ENCODE measurements at regions of chr5 and their contacts with region 1.

Region 1: GRCh38 chr5:142713121-142713706 is 27.3 kb upstream of the FGF1 start:
- DNase-seq: peak; percentile 93
- ATAC-seq: peak; percentile 98
- H3K4me3 ChIP-seq: peak overlapping the region; percentile 28 to 68 (median 57)
- H3K4me3 Mint-ChIP-seq: peak overlapping the region; percentile 80
- H3K27ac ChIP-seq: no peak overlapping the region
- H3K27ac Mint-ChIP-seq: no peak overlapping the region
- H3K4me1 ChIP-seq: peaks cover 3 to 9% of the 10 kb centered on the region in 2 donors
- H3K4me1 Mint-ChIP-seq: peaks cover 5% of the 10 kb centered on the region
- H3K27me3 ChIP-seq: peaks cover 0 to 15% (median 4%) of the 10 kb centered on the region in 4 experiments
- H3K27me3 Mint-ChIP-seq: peaks cover 18% of the 10 kb centered on the region
- CTCF ChIP-seq: peak; percentile 99

Region 2: GRCh38 chr5:142151436-142152383 is 561.5 kb before region 1 on chr5:
- CTCF ChIA-PET with region 1: interaction called, 8 read pairs
- POLR2A ChIA-PET with region 1: no interaction called
- intact Hi-C with region 1: loop called (anchors 5 kb)
- DNase-seq: peak; percentile 67
- ATAC-seq: no peak
- H3K4me3 ChIP-seq: no peak overlapping the region
- H3K4me3 Mint-ChIP-seq: no peak overlapping the region
- H3K27ac ChIP-seq: no peak overlapping the region
- H3K27ac Mint-ChIP-seq: no peak overlapping the region
- H3K4me1 ChIP-seq: no peaks in the 10 kb centered on the region
- H3K4me1 Mint-ChIP-seq: no peaks in the 10 kb centered on the region
- H3K27me3 ChIP-seq: no peaks in the 10 kb centered on the region
- H3K27me3 Mint-ChIP-seq: no peaks in the 10 kb centered on the region
- CTCF ChIP-seq: peak; percentile 90

Region 3: GRCh38 chr5:142701673-142702311 is 11.4 kb before region 1 on chr5:
- CTCF ChIA-PET with region 1: interaction called, 16 read pairs
- POLR2A ChIA-PET with region 1: no interaction called
- intact Hi-C with region 1: no loop called
- DNase-seq: no peak
- ATAC-seq: no peak
- H3K4me3 ChIP-seq: no peak overlapping the region
- H3K4me3 Mint-ChIP-seq: no peak overlapping the region
- H3K27ac ChIP-seq: no peak overlapping the region
- H3K27ac Mint-ChIP-seq: no peak overlapping the region
- H3K4me1 ChIP-seq: no peaks in the 10 kb centered on the region
- H3K4me1 Mint-ChIP-seq: no peaks in the 10 kb centered on the region
- H3K27me3 ChIP-seq: peaks cover 0 to 5% (median 4%) of the 10 kb centered on the region in 4 experiments
- H3K27me3 Mint-ChIP-seq: peaks cover 22% of the 10 kb centered on the region
- CTCF ChIP-seq: no peak

Region 4: DNA sequence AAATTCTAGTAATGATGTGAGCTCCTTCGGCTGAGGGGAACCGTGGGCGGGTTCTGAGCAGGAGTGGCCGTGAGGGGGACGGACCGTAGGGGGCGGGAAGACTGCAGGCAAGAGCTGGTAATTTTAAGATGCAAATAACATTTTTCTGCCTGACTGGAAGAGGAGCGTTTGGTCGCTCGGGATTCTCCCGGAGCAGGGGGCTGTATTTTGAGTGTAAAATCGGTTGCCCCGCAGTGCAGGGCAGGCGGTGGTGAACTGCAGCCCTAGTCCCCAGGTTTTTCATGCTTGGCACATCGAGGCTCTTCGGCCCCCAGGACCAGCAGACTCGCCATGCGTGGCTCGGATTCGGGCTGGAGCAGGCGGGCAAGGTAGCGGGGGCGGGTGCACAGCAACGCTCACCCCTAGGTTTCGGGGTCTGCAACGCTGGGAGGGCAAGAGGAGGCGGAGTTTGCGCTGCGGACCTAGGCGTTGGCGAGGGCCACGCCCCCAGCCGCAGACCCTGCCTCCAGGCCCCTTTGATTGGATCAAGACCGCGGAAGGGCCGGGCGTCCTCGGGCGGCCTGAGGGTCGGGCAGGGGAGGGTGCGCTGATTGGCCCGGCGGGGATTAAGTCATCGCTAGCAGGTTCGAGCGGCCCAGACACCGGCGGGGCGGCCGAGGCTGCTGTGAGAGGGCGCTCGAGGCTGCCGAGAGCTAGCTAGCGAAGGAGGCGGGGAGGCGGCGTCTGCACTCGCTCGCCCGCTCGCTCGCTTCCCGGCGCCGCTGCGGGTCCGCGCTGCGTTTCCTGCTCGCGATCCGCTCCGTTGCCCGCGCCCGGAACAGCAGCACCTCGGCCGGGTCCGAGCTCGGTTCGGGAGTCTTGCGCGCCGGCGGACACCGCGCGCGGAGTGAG is 56.8 kb after region 1 on chr5 and contains the start of gene ARHGAP26:
- CTCF ChIA-PET with region 1: interaction called, 7 read pairs
- POLR2A ChIA-PET with region 1: no interaction called
- intact Hi-C with region 1: loop called (anchors 1 kb)
- DNase-seq: peak; percentile 96
- ATAC-seq: peak; percentile 94
- H3K4me3 ChIP-seq: peak within 1 kb of the TSS; percentile 78 to 90 (median 90)
- H3K4me3 Mint-ChIP-seq: peak within 1 kb of the TSS; percentile 97
- H3K27ac ChIP-seq: peak within 1 kb of the TSS; percentile 3 to 68
- H3K27ac Mint-ChIP-seq: peak within 1 kb of the TSS; percentile 85
- H3K4me1 ChIP-seq: peaks cover 11 to 12% of the 10 kb centered on the region in 2 donors
- H3K4me1 Mint-ChIP-seq: peaks cover 20% of the 10 kb centered on the region
- H3K27me3 ChIP-seq: no peaks in the 10 kb centered on the region
- H3K27me3 Mint-ChIP-seq: no peaks in the 10 kb centered on the region
- CTCF ChIP-seq: peak; percentile 9
- total RNA-seq, gene ARHGAP26: 22.5 and 27.8 TPM in 2 replicates

Region 5: GRCh38 chr5:142881076-142881783 is 168.0 kb after region 1 on chr5:
- CTCF ChIA-PET with region 1: interaction called, 75 read pairs
- POLR2A ChIA-PET with region 1: no interaction called
- intact Hi-C with region 1: loop called (anchors 1 kb)
- DNase-seq: peak; percentile 47
- ATAC-seq: peak; percentile 54
- H3K4me3 ChIP-seq: no peak overlapping the region
- H3K4me3 Mint-ChIP-seq: no peak overlapping the region
- H3K27ac ChIP-seq: no peak overlapping the region
- H3K27ac Mint-ChIP-seq: no peak overlapping the region
- H3K4me1 ChIP-seq: peaks cover 0 to 5% of the 10 kb centered on the region in 2 donors
- H3K4me1 Mint-ChIP-seq: peaks cover 9% of the 10 kb centered on the region
- H3K27me3 ChIP-seq: no peaks in the 10 kb centered on the region
- H3K27me3 Mint-ChIP-seq: no peaks in the 10 kb centered on the region
- CTCF ChIP-seq: no peak

Region 6: GRCh38 chr5:144191998-144192397 is 1478.8 kb after region 1 on chr5:
- CTCF ChIA-PET with region 1: interaction called, 3 read pairs
- POLR2A ChIA-PET with region 1: no interaction called
- intact Hi-C with region 1: loop called (anchors 10 kb)
- DNase-seq: peak; percentile 86
- ATAC-seq: peak; percentile 76
- H3K4me3 ChIP-seq: peak overlapping the region in 2 of 5 experiments; percentile 8 to 19
- H3K4me3 Mint-ChIP-seq: no peak overlapping the region
- H3K27ac ChIP-seq: peak overlapping the region; percentile 54 to 70
- H3K27ac Mint-ChIP-seq: no peak overlapping the region
- H3K4me1 ChIP-seq: peaks cover 46% of the 10 kb centered on the region in 2 donors
- H3K4me1 Mint-ChIP-seq: peaks cover 40% of the 10 kb centered on the region
- H3K27me3 ChIP-seq: no peaks in the 10 kb centered on the region
- H3K27me3 Mint-ChIP-seq: no peaks in the 10 kb centered on the region
- CTCF ChIP-seq: peak; percentile 84

Region 7: DNA sequence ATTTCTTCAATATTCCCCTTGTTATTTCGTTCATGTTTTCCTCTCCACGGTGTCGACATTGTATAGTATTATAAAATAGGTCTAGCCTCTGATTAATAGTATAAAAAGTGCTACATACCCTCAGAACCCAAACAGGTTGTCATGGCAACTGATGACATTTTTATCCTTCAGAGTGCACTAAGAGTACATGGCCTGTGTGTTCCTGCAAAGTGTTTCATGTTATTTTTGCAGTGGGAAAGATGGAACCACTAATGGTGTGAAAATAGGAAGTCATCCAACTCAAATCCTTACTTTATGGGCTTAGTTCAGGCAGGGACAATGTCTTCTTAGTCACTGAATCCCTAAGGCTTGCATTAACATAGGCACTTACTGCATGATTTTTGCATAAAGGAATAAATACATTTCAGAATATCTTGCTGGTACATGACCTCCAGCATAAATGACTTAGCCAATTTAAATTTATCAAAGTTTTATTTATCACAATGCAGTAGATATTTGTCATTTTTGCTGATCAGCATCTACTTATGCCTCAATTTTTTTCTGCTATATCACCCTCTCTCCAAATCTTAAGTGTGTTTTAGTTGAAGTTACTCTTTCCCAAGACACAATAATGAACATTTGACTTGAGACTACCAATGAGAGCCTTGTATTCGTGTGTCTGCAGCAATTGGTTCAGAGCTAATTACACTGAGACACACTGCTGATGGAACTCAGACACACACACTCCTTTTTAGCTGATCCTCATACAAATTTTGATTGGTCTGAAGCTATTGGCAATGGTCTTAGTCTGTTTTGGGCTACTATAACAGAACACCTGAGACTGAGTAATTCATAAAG is 1701.2 kb after region 1 on chr5:
- CTCF ChIA-PET with region 1: no interaction called
- POLR2A ChIA-PET with region 1: no interaction called
- intact Hi-C with region 1: no loop called
- DNase-seq: no peak
- ATAC-seq: no peak
- H3K4me3 ChIP-seq: no peak overlapping the region
- H3K4me3 Mint-ChIP-seq: no peak overlapping the region
- H3K27ac ChIP-seq: no peak overlapping the region
- H3K27ac Mint-ChIP-seq: no peak overlapping the region
- H3K4me1 ChIP-seq: no peaks in the 10 kb centered on the region
- H3K4me1 Mint-ChIP-seq: no peaks in the 10 kb centered on the region
- H3K27me3 ChIP-seq: no peaks in the 10 kb centered on the region
- H3K27me3 Mint-ChIP-seq: no peaks in the 10 kb centered on the region
- CTCF ChIP-seq: no peak

Measured in B cell (primary cell).